Vagina (tissue), 2 donors: ENCODE measurements at regions of chr19 and their contacts with region 1.

Region 1: DNA sequence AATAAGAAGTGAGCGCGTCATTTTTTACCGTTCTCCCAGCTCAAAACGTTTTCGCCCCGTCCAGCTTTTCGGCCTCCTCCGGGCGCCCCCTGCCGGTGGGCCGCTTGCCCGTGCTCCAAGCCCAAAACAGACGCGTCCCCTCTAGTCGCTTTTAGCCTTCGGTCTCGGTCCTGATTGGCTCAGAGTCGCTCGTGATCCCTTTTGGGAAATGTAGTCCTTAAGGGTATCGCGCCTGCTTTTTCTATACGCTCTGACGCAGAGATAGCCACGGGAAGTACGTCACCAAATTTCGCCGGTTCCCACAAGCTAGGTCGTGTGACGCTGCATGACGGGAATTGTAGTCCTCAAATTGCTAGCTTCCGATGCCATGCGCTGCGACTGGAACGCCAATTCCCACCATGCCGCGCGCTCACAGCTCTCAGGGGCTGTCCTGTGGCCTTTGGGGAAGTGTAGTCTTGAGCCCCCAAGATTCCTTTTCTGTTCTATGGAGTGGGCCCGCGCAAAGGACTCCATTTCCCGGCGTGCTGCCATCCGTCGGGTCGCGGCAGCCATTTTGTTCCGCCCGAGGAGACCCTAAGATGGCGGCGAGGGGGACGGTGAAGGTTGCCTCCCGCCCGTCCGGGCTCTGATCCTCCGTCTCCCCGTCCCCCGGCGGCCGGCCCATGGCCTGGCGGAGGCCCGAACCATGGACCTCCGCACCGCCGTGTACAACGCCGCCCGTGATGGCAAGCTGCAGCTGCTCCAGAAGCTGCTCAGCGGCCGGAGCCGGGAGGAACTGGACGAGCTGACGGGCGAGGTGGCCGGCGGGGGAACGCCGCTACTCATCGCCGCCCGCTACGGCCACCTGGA is at the start of gene FEM1A:
- DNase-seq: peak; percentile 100
- H3K4me3 ChIP-seq: peak within 1 kb of the TSS; percentile 88 to 99
- H3K27ac ChIP-seq: peak within 1 kb of the TSS; percentile 84
- H3K4me1 ChIP-seq: peaks cover 45% of the 10 kb centered on the region
- H3K27me3 ChIP-seq: no peaks in the 10 kb centered on the region
- CTCF ChIP-seq: peak; percentile 88 to 99 (median 99)
- POLR2A ChIP-seq: peak in 1 of 2 donors; percentile 66
- total RNA-seq, gene FEM1A: 16.2 TPM

Region 2: GRCh38 chr19:4738734-4739133 is 52.7 kb before region 1 on chr19:
- intact Hi-C with region 1: loop called (anchors 5 kb)
- DNase-seq: no peak
- H3K4me3 ChIP-seq: no peak overlapping the region
- H3K27ac ChIP-seq: no peak overlapping the region
- H3K4me1 ChIP-seq: peaks cover 8% of the 10 kb centered on the region
- H3K27me3 ChIP-seq: no peaks in the 10 kb centered on the region
- CTCF ChIP-seq: no peak
- POLR2A ChIP-seq: no peak

Region 3: GRCh38 chr19:4831304-4831978 is 40.0 kb after region 1 on chr19 and contains the start of gene TICAM1:
- intact Hi-C with region 1: no loop called
- DNase-seq: no peak
- H3K4me3 ChIP-seq: peak within 1 kb of the TSS; percentile 84 to 89
- H3K27ac ChIP-seq: peak within 1 kb of the TSS; percentile 96
- H3K4me1 ChIP-seq: peaks cover 21% of the 10 kb centered on the region
- H3K27me3 ChIP-seq: no peaks in the 10 kb centered on the region
- CTCF ChIP-seq: no peak
- POLR2A ChIP-seq: peak in 1 of 2 donors; percentile 62
- total RNA-seq, gene TICAM1: 16.5 TPM